ENCODE measurements at regions of chr1 and their contacts with region 1.

Region 1: GRCh38 chr1:191222206-191222605 is 744.5 kb upstream of the BRINP3 start:
- DNase-seq: no peak
- ATAC-seq: no peak
- H3K4me3 ChIP-seq: no peak overlapping the region
- H3K4me3 Mint-ChIP-seq: no peak overlapping the region
- H3K27ac ChIP-seq: no peak overlapping the region
- H3K27ac Mint-ChIP-seq: no peak overlapping the region
- H3K4me1 ChIP-seq: no peaks in the 10 kb centered on the region
- H3K4me1 Mint-ChIP-seq: no peaks in the 10 kb centered on the region
- H3K27me3 ChIP-seq: no peaks in the 10 kb centered on the region
- H3K27me3 Mint-ChIP-seq: no peaks in the 10 kb centered on the region
- CTCF ChIP-seq: no peak

Region 2: GRCh38 chr1:191851799-191852595 is 629.8 kb after region 1 on chr1:
- CTCF ChIA-PET with region 1: no interaction called
- POLR2A ChIA-PET with region 1: no interaction called
- intact Hi-C with region 1: loop called in 1 of 2 experiments (anchors 5 kb)
- DNase-seq: no peak
- ATAC-seq: no peak
- H3K4me3 ChIP-seq: no peak overlapping the region
- H3K4me3 Mint-ChIP-seq: no peak overlapping the region
- H3K27ac ChIP-seq: no peak overlapping the region
- H3K27ac Mint-ChIP-seq: no peak overlapping the region
- H3K4me1 ChIP-seq: no peaks in the 10 kb centered on the region
- H3K4me1 Mint-ChIP-seq: no peaks in the 10 kb centered on the region
- H3K27me3 ChIP-seq: no peaks in the 10 kb centered on the region
- H3K27me3 Mint-ChIP-seq: no peaks in the 10 kb centered on the region
- CTCF ChIP-seq: no peak

Region 3: GRCh38 chr1:192700834-192701271 is 1478.6 kb after region 1 on chr1:
- CTCF ChIA-PET with region 1: no interaction called
- POLR2A ChIA-PET with region 1: no interaction called
- intact Hi-C with region 1: no loop called
- DNase-seq: no peak
- ATAC-seq: no peak
- H3K4me3 ChIP-seq: no peak overlapping the region
- H3K4me3 Mint-ChIP-seq: no peak overlapping the region
- H3K27ac ChIP-seq: no peak overlapping the region
- H3K27ac Mint-ChIP-seq: no peak overlapping the region
- H3K4me1 ChIP-seq: no peaks in the 10 kb centered on the region
- H3K4me1 Mint-ChIP-seq: no peaks in the 10 kb centered on the region
- H3K27me3 ChIP-seq: no peaks in the 10 kb centered on the region
- H3K27me3 Mint-ChIP-seq: no peaks in the 10 kb centered on the region
- CTCF ChIP-seq: no peak

Measured in CD8-positive, alpha-beta T cell (primary cell).